Activated CD4-positive, alpha-beta memory T cell treated with anti-CD3 and anti-CD28 coated beads for 36 hours (primary cell): ENCODE measurements at regions of chr5 and their contacts with region 1.

Region 1: DNA sequence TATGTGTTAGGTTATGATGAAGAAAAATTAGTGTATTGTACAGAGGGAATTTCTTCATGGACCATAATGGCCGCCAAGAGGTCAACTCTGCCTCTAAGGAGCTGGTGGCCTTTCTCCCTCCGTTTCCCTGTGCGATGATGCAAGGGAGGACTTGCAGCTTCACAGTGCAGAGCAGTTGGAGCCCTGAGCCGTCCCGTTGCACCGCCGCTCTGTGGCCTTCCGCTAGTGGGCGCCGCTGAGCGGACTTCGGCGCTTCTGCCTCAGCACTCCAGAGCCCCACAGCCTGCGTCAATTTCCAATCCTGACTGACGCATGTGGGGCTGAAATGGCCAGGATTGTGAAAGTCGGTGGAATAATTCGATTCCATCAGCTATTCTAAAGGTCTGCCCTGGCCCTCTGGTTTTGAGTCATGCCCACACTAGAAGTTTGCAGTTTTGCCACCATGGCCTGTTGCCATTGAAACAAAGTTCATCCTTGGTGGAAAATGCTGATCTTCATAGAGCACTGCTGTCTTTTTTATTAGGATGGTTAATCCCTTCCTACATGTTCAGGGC is 22.7 kb upstream of the LECT2 start:
- DNase-seq: peak; percentile 73
- H3K4me3 Mint-ChIP-seq: no peak overlapping the region
- H3K27ac Mint-ChIP-seq: no peak overlapping the region
- H3K4me1 Mint-ChIP-seq: no peaks in the 10 kb centered on the region
- H3K27me3 Mint-ChIP-seq: peaks cover 36% of the 10 kb centered on the region

Region 2: DNA sequence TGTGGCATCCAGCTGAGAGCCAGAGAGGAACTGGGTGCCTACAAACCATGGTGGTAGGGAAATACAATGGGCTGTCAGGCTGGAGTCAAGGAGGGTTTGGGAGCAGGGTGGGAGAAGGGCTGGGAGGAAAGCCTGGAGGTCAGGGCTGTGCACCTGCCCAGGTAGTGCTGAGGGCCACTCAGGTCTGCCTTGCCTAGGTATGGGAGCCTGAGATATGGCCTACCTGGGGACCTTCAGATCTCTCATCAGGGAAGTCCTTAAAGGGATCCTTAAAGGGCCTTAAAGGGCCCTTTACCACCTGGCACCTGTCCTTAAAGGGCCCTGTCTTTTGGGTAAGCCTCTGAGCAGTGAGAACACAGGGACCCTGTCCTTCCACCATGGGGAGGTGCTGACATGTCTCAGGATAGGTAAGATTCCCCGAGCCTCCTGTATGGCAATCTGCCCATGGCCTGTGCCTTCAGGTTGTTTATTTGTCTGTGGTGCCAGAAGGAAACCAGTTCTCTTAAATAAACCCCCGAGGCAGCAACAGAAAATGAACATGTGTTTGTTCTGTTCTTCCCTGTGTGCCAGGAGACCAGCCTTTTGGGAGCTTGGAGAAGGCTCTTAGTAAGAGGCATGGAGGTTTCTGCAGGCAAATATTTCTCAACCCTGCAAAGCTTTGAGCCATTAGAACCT is 119.7 kb before region 1 on chr5:
- CTCF ChIA-PET with region 1: no interaction called
- POLR2A ChIA-PET with region 1: no interaction called
- intact Hi-C with region 1: no loop called
- DNase-seq: no peak
- H3K4me3 Mint-ChIP-seq: no peak overlapping the region
- H3K27ac Mint-ChIP-seq: no peak overlapping the region
- H3K4me1 Mint-ChIP-seq: no peaks in the 10 kb centered on the region
- H3K27me3 Mint-ChIP-seq: peaks cover 7% of the 10 kb centered on the region

Region 3: GRCh38 chr5:135989686-135990085 is 12.2 kb after region 1 on chr5:
- CTCF ChIA-PET with region 1: interaction called, 10 read pairs
- POLR2A ChIA-PET with region 1: no interaction called
- intact Hi-C with region 1: no loop called
- DNase-seq: no peak
- H3K4me3 Mint-ChIP-seq: no peak overlapping the region
- H3K27ac Mint-ChIP-seq: no peak overlapping the region
- H3K4me1 Mint-ChIP-seq: no peaks in the 10 kb centered on the region
- H3K27me3 Mint-ChIP-seq: peaks cover 17% of the 10 kb centered on the region

Region 4: DNA sequence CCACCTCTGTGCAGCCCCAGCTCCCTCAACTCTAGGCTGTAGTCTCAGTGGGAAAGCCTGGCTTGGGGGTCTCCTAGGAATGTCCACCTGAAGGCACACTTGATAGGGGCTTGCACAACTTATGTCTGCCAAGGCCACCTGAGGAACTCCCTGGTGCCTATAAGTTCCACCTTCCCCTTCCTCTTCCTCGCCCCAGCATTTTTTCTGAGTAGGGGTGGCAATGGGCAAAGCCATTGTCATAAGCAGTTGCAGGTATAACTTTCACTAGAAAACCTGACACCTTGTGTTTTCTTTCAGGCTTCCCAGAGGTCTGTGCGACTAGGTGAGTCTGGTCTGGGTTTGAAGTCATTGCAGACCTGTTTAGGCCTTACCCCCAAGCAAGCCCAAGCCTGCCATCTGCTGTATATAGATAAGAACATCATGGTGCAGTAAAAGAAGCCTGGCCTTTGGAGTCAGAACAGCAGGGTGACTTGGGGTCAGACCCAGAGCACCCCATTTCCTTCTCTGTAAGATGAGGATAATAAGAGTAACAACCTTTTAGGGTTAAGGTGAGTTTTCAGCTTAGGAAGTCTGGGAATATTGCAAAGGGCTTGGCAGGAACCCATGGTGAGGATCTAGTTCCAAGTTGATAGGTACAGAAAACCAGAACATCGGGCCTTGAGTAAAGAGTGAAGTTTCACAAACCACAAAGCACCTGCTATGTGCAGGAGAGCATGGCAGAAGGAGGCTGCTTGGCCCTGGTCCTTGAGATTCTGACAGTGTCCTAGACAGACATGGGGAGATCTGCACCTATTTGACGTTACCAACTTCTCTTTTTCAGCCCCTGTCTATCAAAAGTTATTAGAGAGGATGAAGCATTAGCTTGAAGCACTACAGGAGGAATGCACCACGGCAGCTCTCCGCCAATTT is 85.2 kb after region 1 on chr5:
- CTCF ChIA-PET with region 1: interaction called, 5 read pairs
- POLR2A ChIA-PET with region 1: no interaction called
- intact Hi-C with region 1: loop called (anchors 1 kb)
- DNase-seq: peak; percentile 29
- H3K4me3 Mint-ChIP-seq: no peak overlapping the region
- H3K27ac Mint-ChIP-seq: no peak overlapping the region
- H3K4me1 Mint-ChIP-seq: no peaks in the 10 kb centered on the region
- H3K27me3 Mint-ChIP-seq: no peaks in the 10 kb centered on the region